Naive thymus-derived CD4-positive, alpha-beta T cell (primary cell): ENCODE measurements at regions of chr1 and their contacts with region 1.

Region 1: GRCh38 chr1:208025031-208025430 is 114.1 kb upstream of the CD34 start:
- DNase-seq: no peak
- ATAC-seq: no peak
- H3K4me3 ChIP-seq: no peak overlapping the region
- H3K4me3 Mint-ChIP-seq: no peak overlapping the region
- H3K27ac ChIP-seq: no peak overlapping the region
- H3K27ac Mint-ChIP-seq: no peak overlapping the region
- H3K4me1 ChIP-seq: no peaks in the 10 kb centered on the region
- H3K4me1 Mint-ChIP-seq: no peaks in the 10 kb centered on the region
- H3K27me3 ChIP-seq: no peaks in the 10 kb centered on the region
- H3K27me3 Mint-ChIP-seq: peaks cover 0 to 6% (median 0%) of the 10 kb centered on the region in 5 donors

Region 2: DNA sequence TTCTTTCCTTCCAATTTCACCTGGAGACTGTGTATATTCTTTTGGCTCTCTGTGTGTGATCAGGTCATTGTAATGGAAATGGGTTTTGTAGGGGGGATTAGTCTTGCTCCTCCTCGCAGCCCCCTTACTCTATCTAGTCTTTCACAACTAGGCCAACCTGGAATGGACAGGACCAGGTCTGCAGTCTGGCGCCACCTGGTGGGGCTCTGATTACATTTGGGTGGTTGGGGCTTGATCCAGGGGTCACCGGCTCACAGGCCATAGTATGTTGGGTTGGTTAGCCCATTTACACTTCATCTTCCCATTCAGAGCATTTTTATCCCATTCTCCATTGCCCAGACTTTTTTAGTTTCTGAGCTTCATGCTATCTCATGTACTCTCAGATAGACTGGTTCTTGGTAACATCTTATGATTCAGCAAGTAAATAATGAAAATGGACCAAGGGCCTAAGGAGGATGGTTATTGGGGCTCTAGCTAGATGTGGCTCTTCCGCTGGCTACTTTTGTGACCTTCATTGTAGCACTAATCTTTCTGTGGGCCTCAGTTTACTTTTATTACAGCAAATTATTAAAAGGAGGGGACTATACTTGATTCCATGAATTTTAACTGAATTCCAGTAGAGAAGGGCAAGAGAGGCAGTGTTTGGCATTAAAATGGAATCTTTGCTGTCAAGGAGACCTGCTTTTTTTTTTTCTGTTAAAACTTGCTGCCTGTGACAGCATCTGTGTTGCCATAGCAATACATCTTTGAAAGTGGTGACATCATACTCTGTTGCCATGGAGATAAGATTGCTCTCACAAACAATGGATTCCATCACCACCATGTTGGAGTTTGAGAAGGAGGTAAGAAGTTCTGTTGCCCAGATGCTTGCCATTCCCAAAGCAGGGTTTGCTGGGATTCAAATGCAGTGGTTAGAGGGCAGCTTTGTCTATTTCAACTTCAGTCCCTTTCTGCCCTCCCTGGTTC is 69.0 kb after region 1 on chr1:
- CTCF ChIA-PET with region 1: interaction called, 11 read pairs
- POLR2A ChIA-PET with region 1: no interaction called
- intact Hi-C with region 1: loop called (anchors 1 kb)
- DNase-seq: peak; percentile 21 to 62 (median 49)
- ATAC-seq: peak; percentile 62
- H3K4me3 ChIP-seq: no peak overlapping the region
- H3K4me3 Mint-ChIP-seq: no peak overlapping the region
- H3K27ac ChIP-seq: no peak overlapping the region
- H3K27ac Mint-ChIP-seq: peak overlapping the region in 2 of 9 donors; percentile 4 to 54
- H3K4me1 ChIP-seq: no peaks in the 10 kb centered on the region
- H3K4me1 Mint-ChIP-seq: no peaks in the 10 kb centered on the region
- H3K27me3 ChIP-seq: no peaks in the 10 kb centered on the region
- H3K27me3 Mint-ChIP-seq: peaks cover 0 to 3% (median 0%) of the 10 kb centered on the region in 5 donors